CD14-positive monocyte (primary cell): ENCODE measurements at regions of chr2 and their contacts with region 1.

Region 1: DNA sequence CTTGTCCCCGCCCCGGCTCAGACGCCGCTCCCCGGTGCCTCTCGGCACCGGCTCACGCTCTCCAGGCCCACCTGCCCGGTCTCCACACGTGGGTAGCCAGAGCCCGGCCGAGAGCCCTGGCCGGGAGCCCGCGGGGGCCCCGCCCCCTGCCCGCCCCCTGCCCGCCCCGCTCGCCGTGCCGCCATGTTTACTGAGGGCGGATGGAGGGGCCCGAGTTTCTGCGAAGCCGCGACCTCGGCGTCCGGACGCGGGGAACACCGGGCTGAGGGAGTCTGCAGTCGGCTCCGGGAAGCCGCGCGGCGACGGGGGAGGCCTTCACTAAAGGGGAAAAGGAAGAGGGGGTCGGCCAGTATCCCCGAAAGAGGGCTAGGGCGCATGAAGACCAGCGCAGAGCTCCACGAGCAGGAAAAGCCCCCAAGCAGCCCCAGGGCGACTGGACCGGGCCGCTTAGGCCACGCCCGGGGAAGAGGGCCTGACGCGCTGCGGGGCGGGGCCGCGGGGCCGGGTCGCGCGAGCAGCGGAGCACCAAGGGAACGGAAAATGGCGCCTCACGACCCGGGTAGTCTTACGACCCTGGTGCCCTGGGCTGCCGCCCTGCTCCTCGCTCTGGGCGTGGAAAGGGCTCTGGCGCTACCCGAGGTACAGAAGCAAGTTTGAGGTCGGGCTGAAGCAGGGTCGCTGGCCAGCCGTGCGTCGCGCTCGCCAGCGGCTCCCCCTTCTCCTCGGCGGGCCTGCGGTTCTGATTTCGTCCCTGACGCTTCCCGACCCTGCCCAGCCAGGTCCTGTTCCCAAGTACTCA is at the starts of genes ATRAID and SLC5A6:
- DNase-seq: peak; percentile 81 to 84 (median 84)
- H3K4me3 ChIP-seq: peak within 1 kb of the TSS; percentile 66 to 86 (median 78)
- H3K4me3 Mint-ChIP-seq: peak within 1 kb of the TSS; percentile 92 to 98
- H3K27ac ChIP-seq: peak within 1 kb of the TSS; percentile 94 to 99
- H3K27ac Mint-ChIP-seq: peak within 1 kb of the TSS; percentile 98 to 100 (median 100)
- H3K4me1 ChIP-seq: peaks cover 16 to 23% of the 10 kb centered on the region in 2 donors
- H3K4me1 Mint-ChIP-seq: peaks cover 23% of the 10 kb centered on the region
- H3K27me3 ChIP-seq: no peaks in the 10 kb centered on the region
- H3K27me3 Mint-ChIP-seq: peaks cover 0 to 1% (median 0%) of the 10 kb centered on the region in 3 donors
- CTCF ChIP-seq: no peak
- polyA plus RNA-seq, gene ATRAID: 120 to 298 (median 287) TPM
- polyA plus RNA-seq, gene SLC5A6: 8.1 to 21.7 (median 10.2) TPM

Region 2: GRCh38 chr2:27086090-27086723 is 125.8 kb before region 1 on chr2:
- intact Hi-C with region 1: loop called in 1 of 2 experiments (anchors 5 kb)
- DNase-seq: peak; percentile 92 to 94 (median 93)
- H3K4me3 ChIP-seq: peak overlapping the region; percentile 56 to 77 (median 71)
- H3K4me3 Mint-ChIP-seq: peak overlapping the region; percentile 85 to 86
- H3K27ac ChIP-seq: peak overlapping the region; percentile 70 to 84
- H3K27ac Mint-ChIP-seq: peak overlapping the region; percentile 31 to 88 (median 85)
- H3K4me1 ChIP-seq: peaks cover 34 to 41% of the 10 kb centered on the region in 2 donors
- H3K4me1 Mint-ChIP-seq: peaks cover 31% of the 10 kb centered on the region
- H3K27me3 ChIP-seq: no peaks in the 10 kb centered on the region
- H3K27me3 Mint-ChIP-seq: peaks cover 0 to 7% (median 5%) of the 10 kb centered on the region in 3 donors
- CTCF ChIP-seq: peak; percentile 92

Region 3: GRCh38 chr2:27095745-27096651 is 116.0 kb before region 1 on chr2:
- intact Hi-C with region 1: loop called in 1 of 2 experiments (anchors 5 kb)
- DNase-seq: peak; percentile 48 to 65 (median 55)
- H3K4me3 ChIP-seq: peak overlapping the region; percentile 44 to 78 (median 48)
- H3K4me3 Mint-ChIP-seq: peak overlapping the region; percentile 84 to 93
- H3K27ac ChIP-seq: peak overlapping the region; percentile 21 to 77
- H3K27ac Mint-ChIP-seq: peak overlapping the region; percentile 80 to 96 (median 90)
- H3K4me1 ChIP-seq: peaks cover 23 to 24% of the 10 kb centered on the region in 2 donors
- H3K4me1 Mint-ChIP-seq: peaks cover 21% of the 10 kb centered on the region
- H3K27me3 ChIP-seq: no peaks in the 10 kb centered on the region
- H3K27me3 Mint-ChIP-seq: peaks cover 0 to 3% (median 3%) of the 10 kb centered on the region in 3 donors
- CTCF ChIP-seq: no peak

Region 4: DNA sequence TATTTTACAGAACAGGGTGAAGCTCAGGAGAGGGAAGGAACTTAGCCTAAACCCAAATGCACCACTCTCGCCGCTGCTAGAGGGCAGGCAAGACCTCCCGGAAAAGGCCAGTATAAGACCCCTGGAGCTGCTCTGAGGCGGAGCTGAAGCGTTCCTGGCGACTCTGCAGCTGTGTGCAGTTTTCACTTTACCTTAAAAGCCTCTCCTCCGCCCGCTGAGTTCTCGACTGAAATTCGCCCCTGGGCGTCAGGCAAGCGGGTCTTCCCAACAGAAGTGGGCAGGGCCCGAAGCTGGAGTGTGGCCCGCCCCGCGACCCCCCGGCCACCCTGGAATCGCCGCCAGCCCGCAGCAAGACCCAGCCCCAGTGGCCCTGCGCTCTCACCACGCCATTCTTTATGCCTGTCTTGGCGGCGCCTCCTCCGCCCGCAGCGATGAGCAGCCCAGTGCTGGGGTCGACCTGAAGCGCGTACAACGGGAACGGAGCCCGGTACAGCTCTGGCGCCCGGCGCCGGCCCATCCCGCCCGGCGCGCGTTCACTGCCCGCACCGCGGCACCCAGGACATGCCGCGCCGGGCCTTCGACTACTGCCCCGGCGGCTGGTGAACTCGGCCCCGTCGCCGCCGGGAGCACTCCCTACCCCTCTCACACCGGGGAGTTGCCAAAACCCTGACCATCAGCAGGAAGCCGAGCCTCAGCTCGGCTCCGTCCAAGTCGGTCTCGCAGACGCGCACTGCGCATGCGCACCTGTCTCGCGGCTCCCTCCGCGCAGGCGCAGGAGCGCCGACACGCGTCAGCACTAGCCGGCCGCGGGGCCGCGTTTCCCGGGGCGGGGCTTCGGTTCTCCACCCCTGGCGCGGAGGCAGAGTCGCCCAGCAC is 77.9 kb before region 1 on chr2 and contains the start of gene PREB:
- intact Hi-C with region 1: loop called (anchors 1 to 2 kb)
- DNase-seq: peak; percentile 94 to 97 (median 96)
- H3K4me3 ChIP-seq: peak within 1 kb of the TSS; percentile 77 to 98 (median 81)
- H3K4me3 Mint-ChIP-seq: peak within 1 kb of the TSS; percentile 88 to 95
- H3K27ac ChIP-seq: peak within 1 kb of the TSS; percentile 34 to 95
- H3K27ac Mint-ChIP-seq: peak within 1 kb of the TSS; percentile 89 to 96 (median 95)
- H3K4me1 ChIP-seq: peaks cover 19% of the 10 kb centered on the region in 2 donors
- H3K4me1 Mint-ChIP-seq: peaks cover 18% of the 10 kb centered on the region
- H3K27me3 ChIP-seq: no peaks in the 10 kb centered on the region
- H3K27me3 Mint-ChIP-seq: peaks cover 0 to 9% (median 4%) of the 10 kb centered on the region in 3 donors
- CTCF ChIP-seq: peak; percentile 32
- polyA plus RNA-seq, gene PREB: 70.0 to 78.2 (median 71.7) TPM

Region 5: DNA sequence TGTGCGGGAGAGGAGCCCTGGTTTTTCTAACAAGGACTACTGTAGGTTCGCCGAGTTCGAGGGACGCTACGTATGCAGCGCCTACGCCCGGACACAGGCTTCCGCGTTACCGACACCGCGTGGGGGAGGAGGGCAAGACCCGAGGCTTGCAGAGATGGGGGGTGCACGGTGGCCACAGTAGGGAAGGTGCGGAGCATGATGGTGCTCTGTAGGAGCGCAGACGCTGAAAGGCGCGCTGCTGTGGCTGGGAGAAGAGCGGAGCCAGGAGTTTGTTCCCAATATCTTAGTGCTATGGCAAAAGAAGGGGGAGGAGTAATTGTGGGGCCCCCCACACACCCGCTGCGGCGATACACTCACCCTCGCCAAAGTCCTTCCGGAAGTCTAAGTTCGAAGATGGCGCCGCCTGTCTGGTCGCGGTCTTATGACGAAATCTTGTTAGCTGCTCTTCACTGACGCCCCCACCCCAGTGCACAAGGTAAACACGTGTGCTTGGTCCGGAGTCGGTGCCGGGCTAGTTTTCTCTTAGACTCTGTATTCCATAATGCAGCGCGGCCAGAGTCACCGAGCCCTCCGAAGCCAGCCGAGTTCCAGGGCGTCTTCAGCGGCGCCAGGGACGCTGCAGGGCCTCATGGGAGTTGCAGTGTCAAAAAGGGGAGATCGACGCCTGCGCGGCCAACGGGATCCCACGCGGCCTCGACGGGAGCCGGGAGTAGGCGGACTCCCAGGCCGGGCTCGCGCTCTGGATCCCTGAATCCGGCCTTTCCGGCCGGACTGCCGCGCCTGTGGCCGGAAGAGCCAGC is 144.6 kb after region 1 on chr2 and contains the start of gene GTF3C2:
- intact Hi-C with region 1: loop called in 1 of 2 experiments (anchors 5 kb)
- DNase-seq: peak; percentile 93 to 97 (median 94)
- H3K4me3 ChIP-seq: peak within 1 kb of the TSS; percentile 76 to 93 (median 90)
- H3K4me3 Mint-ChIP-seq: peak within 1 kb of the TSS; percentile 97 to 99
- H3K27ac ChIP-seq: peak within 1 kb of the TSS; percentile 90 to 95
- H3K27ac Mint-ChIP-seq: peak within 1 kb of the TSS; percentile 98 to 100 (median 99)
- H3K4me1 ChIP-seq: peaks cover 16 to 28% of the 10 kb centered on the region in 2 donors
- H3K4me1 Mint-ChIP-seq: peaks cover 37% of the 10 kb centered on the region
- H3K27me3 ChIP-seq: no peaks in the 10 kb centered on the region
- H3K27me3 Mint-ChIP-seq: no peaks in the 10 kb centered on the region
- CTCF ChIP-seq: no peak
- polyA plus RNA-seq, gene GTF3C2: 34.4 to 70.8 (median 41.7) TPM

Region 6: GRCh38 chr2:27428213-27428977 is 216.4 kb after region 1 on chr2 and contains the start of gene NRBP1:
- intact Hi-C with region 1: loop called in 1 of 2 experiments (anchors 5 kb)
- DNase-seq: peak; percentile 80 to 83 (median 80)
- H3K4me3 ChIP-seq: peak within 1 kb of the TSS; percentile 64 to 98 (median 73)
- H3K4me3 Mint-ChIP-seq: peak within 1 kb of the TSS; percentile 96
- H3K27ac ChIP-seq: peak within 1 kb of the TSS; percentile 81 to 89
- H3K27ac Mint-ChIP-seq: peak within 1 kb of the TSS; percentile 90 to 97 (median 93)
- H3K4me1 ChIP-seq: peaks cover 19 to 28% of the 10 kb centered on the region in 2 donors
- H3K4me1 Mint-ChIP-seq: peaks cover 29% of the 10 kb centered on the region
- H3K27me3 ChIP-seq: no peaks in the 10 kb centered on the region
- H3K27me3 Mint-ChIP-seq: no peaks in the 10 kb centered on the region
- CTCF ChIP-seq: no peak
- polyA plus RNA-seq, gene NRBP1: 95.6 to 108 (median 102) TPM

Region 7: DNA sequence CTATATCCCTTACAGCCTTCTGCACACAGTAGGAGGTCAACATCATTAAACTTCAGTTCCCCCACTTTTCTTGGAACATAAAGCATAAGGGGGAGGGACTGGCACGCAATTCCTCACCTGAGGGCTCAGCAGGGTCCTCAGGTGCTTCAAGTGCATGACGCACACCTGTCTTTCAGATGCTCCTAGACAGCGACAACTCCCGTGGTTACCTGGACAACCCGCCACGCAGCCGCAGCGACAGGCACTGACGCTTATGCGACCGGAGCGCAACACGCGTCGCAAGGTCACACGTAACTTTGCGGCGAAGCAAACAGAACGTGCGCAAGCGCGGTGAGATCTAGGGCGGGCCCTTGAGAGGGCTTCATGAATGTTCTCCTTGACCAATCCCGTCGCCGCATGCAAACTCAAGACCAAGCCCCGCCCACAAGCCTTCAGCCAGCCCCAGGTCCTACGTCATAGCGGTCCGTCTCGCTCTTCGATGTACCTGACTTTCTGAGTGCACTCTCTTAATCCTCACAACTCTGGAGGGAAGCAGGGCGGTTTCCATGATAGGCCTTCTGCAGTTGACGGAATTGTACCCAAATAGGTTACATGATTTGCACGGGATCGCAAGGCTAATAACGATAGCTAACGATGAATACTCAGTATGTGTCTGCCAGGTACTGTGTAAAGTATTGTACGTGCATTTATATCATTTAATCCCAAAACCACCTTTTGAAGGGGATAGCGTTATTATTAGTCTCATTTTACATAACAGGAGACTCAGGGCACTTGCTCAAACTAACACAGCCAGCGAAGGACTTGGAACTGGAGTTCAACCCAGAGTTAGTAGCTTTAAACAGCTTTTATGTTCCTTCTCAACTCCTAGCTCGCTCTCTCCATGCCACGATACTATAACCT is 277.7 kb after region 1 on chr2 and contains the start of gene IFT172:
- intact Hi-C with region 1: loop called in 1 of 2 experiments (anchors 5 kb)
- DNase-seq: peak; percentile 98 to 99 (median 99)
- H3K4me3 ChIP-seq: peak within 1 kb of the TSS; percentile 52 to 80 (median 62)
- H3K4me3 Mint-ChIP-seq: peak within 1 kb of the TSS; percentile 81 to 92
- H3K27ac ChIP-seq: peak within 1 kb of the TSS in 1 of 2 donors; percentile 79
- H3K27ac Mint-ChIP-seq: peak within 1 kb of the TSS; percentile 77 to 93 (median 88)
- H3K4me1 ChIP-seq: peaks cover 16 to 22% of the 10 kb centered on the region in 2 donors
- H3K4me1 Mint-ChIP-seq: peaks cover 22% of the 10 kb centered on the region
- H3K27me3 ChIP-seq: peaks cover 14 to 16% of the 10 kb centered on the region in 2 donors
- H3K27me3 Mint-ChIP-seq: peaks cover 23 to 25% (median 24%) of the 10 kb centered on the region in 3 donors
- CTCF ChIP-seq: no peak
- polyA plus RNA-seq, gene IFT172: 1.7 to 12.8 (median 3.6) TPM